ENCODE measurements at regions of chr18 and their contacts with region 1.

Region 1: DNA sequence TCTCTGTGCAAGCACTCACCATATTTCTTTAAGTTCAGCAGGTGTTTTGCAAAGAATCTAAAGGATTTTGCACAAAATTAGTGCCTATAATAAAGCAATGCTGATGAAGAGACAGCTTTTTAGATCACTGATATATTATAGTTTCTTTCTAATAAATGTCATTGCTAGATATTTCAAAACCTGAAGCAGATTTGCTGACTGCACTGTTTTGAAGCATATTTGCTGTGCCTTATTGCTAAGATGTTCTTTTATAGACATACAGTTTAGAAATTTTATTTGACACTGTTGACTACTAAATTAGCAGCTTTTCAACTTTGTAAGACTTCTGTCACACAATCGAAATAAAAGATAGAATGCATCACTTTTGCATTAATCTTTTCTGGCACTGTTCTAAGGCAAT is 620.9 kb upstream of the CELF4 start:
- DNase-seq: no peak
- ATAC-seq: no peak
- H3K4me3 ChIP-seq: no peak overlapping the region
- H3K4me3 Mint-ChIP-seq: no peak overlapping the region
- H3K27ac ChIP-seq: no peak overlapping the region
- H3K27ac Mint-ChIP-seq: no peak overlapping the region
- H3K4me1 ChIP-seq: no peaks in the 10 kb centered on the region
- H3K4me1 Mint-ChIP-seq: no peaks in the 10 kb centered on the region
- H3K27me3 ChIP-seq: no peaks in the 10 kb centered on the region
- H3K27me3 Mint-ChIP-seq: no peaks in the 10 kb centered on the region

Region 2: DNA sequence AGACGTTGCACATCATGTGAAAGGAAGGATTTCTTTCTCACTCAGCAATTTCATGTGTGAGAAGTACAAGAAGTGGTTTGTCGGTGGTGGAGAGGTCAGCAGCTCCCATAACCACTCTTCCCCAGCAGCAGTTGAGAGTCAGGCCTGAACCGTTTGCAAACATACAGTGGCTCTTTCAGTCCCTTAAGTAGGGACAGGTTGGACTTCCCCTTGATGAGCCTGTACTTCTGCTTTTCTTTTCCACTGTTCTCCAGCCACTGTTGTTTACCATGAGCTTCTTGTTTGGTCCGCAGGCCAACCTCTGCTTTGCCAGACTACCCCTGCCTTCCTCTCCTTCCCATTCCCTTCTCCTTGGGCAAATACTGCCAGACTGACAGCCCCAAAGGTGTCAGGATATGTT is 229.6 kb before region 1 on chr18:
- CTCF ChIA-PET with region 1: no interaction called
- POLR2A ChIA-PET with region 1: no interaction called
- DNase-seq: no peak
- ATAC-seq: no peak
- H3K4me3 ChIP-seq: no peak overlapping the region
- H3K4me3 Mint-ChIP-seq: no peak overlapping the region
- H3K27ac ChIP-seq: no peak overlapping the region
- H3K27ac Mint-ChIP-seq: no peak overlapping the region
- H3K4me1 ChIP-seq: no peaks in the 10 kb centered on the region
- H3K4me1 Mint-ChIP-seq: no peaks in the 10 kb centered on the region
- H3K27me3 ChIP-seq: no peaks in the 10 kb centered on the region
- H3K27me3 Mint-ChIP-seq: peaks cover 0 to 3% of the 10 kb centered on the region in 2 donors

Region 3: GRCh38 chr18:38174594-38174993 is 11.9 kb before region 1 on chr18:
- CTCF ChIA-PET with region 1: interaction called in 1 of 2 experiments, 12 read pairs
- POLR2A ChIA-PET with region 1: no interaction called
- DNase-seq: no peak
- ATAC-seq: no peak
- H3K4me3 ChIP-seq: no peak overlapping the region
- H3K4me3 Mint-ChIP-seq: no peak overlapping the region
- H3K27ac ChIP-seq: no peak overlapping the region
- H3K27ac Mint-ChIP-seq: no peak overlapping the region
- H3K4me1 ChIP-seq: no peaks in the 10 kb centered on the region
- H3K4me1 Mint-ChIP-seq: no peaks in the 10 kb centered on the region
- H3K27me3 ChIP-seq: no peaks in the 10 kb centered on the region
- H3K27me3 Mint-ChIP-seq: no peaks in the 10 kb centered on the region

Region 4: GRCh38 chr18:38284972-38285371 is 98.5 kb after region 1 on chr18:
- CTCF ChIA-PET with region 1: no interaction called
- POLR2A ChIA-PET with region 1: no interaction called
- DNase-seq: no peak
- ATAC-seq: no peak
- H3K4me3 ChIP-seq: no peak overlapping the region
- H3K4me3 Mint-ChIP-seq: no peak overlapping the region
- H3K27ac ChIP-seq: no peak overlapping the region
- H3K27ac Mint-ChIP-seq: no peak overlapping the region
- H3K4me1 ChIP-seq: no peaks in the 10 kb centered on the region
- H3K4me1 Mint-ChIP-seq: no peaks in the 10 kb centered on the region
- H3K27me3 ChIP-seq: no peaks in the 10 kb centered on the region
- H3K27me3 Mint-ChIP-seq: peaks cover 0 to 3% of the 10 kb centered on the region in 2 donors

Region 5: DNA sequence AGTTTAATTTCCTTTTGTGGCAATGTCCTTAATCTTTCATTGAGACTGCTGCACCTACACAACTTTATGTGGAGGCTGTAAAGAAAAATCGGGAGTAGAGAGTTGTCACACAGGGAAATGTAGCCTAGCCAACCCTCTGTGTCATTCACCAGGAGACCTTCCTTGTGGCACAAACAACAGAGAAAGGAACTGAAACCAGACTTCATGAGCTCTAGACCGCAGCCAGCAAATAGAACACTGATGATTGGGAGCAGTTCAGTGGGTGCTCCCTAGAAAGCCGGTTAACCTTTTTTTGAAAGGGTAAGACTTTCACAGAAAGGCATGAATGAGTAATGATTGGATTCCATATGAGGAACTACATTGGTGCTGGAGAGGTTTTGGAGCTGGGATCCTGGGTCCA is 1131.5 kb after region 1 on chr18:
- CTCF ChIA-PET with region 1: no interaction called
- POLR2A ChIA-PET with region 1: interaction called in 1 of 2 experiments, 11 read pairs
- DNase-seq: no peak
- ATAC-seq: no peak
- H3K4me3 ChIP-seq: no peak overlapping the region
- H3K4me3 Mint-ChIP-seq: no peak overlapping the region
- H3K27ac ChIP-seq: no peak overlapping the region
- H3K27ac Mint-ChIP-seq: no peak overlapping the region
- H3K4me1 ChIP-seq: no peaks in the 10 kb centered on the region
- H3K4me1 Mint-ChIP-seq: no peaks in the 10 kb centered on the region
- H3K27me3 ChIP-seq: no peaks in the 10 kb centered on the region
- H3K27me3 Mint-ChIP-seq: no peaks in the 10 kb centered on the region